PC-3 (cell line): ENCODE measurements at regions of chr22 and their contacts with region 1.

Region 1: GRCh38 chr22:37953437-37954179 is at the starts of genes C22orf23 and POLR2F:
- DNase-seq: peak; percentile 95
- ATAC-seq: peak; percentile 86
- H3K4me3 ChIP-seq: peak within 1 kb of the TSS; percentile 96
- H3K27ac ChIP-seq: peak within 1 kb of the TSS; percentile 18
- H3K4me1 ChIP-seq: peaks cover 5% of the 10 kb centered on the region
- H3K27me3 ChIP-seq: no peaks in the 10 kb centered on the region
- CTCF ChIP-seq: no peak
- total RNA-seq, gene C22orf23: 0.52 and 0.69 TPM in 2 replicates
- total RNA-seq, gene POLR2F: 177 and 238 TPM in 2 replicates

Region 2: DNA sequence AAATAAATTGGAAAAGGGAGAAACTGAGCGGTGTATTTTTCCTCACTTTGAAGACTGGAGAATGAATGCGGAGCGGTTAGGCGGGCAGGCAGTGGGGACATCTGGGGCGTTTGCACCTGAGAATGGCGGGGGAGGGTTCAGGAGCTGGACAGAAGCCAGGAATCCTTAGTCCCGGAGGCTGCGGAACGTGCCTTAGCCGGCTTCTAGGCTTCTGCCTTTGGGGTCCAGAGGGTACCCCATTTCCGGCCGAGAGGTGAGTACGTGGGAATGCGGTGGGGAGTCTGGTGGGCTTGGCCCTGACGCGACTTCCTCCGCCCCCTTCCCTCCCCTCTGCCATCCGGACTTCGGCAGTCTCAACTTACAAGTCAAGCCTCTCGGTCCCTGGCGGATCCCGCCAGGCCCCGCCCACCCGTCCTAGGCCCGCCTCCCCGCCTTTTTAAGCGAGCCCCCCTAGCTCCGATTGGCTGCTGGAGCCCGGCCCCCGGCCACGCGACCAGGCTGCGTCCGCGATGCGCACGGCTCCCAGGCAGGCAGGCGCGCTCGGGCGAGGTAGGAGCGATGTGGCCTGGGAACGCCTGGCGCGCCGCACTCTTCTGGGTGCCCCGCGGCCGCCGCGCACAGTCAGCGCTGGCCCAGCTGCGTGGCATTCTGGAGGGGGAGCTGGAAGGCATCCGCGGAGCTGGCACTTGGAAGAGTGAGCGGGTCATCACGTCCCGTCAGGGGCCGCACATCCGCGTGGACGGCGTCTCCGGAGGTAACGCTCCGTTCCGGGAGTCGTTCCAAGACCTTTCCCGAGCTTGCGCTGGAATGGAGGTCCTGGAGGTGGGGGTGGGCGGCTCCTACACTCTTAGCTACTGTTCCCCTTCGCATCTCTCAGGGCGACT is 146.0 kb before region 1 on chr22 and contains the start of gene GCAT:
- CTCF ChIA-PET with region 1: no interaction called
- POLR2A ChIA-PET with region 1: interaction called, 10 read pairs
- intact Hi-C with region 1: no loop called
- DNase-seq: peak; percentile 91
- ATAC-seq: peak; percentile 65
- H3K4me3 ChIP-seq: peak within 1 kb of the TSS; percentile 100
- H3K27ac ChIP-seq: peak within 1 kb of the TSS; percentile 66
- H3K4me1 ChIP-seq: peaks cover 17% of the 10 kb centered on the region
- H3K27me3 ChIP-seq: no peaks in the 10 kb centered on the region
- CTCF ChIP-seq: no peak
- total RNA-seq, gene GCAT: 26.0 and 33.3 TPM in 2 replicates

Region 3: GRCh38 chr22:37896181-37896592 is 57.4 kb before region 1 on chr22:
- CTCF ChIA-PET with region 1: no interaction called
- POLR2A ChIA-PET with region 1: interaction called, 19 read pairs
- intact Hi-C with region 1: no loop called
- DNase-seq: peak; percentile 88
- ATAC-seq: peak; percentile 71
- H3K4me3 ChIP-seq: no peak overlapping the region; the same call in 1 of the 2 replicates
- H3K27ac ChIP-seq: peak overlapping the region; percentile 85
- H3K4me1 ChIP-seq: peaks cover 34% of the 10 kb centered on the region
- H3K27me3 ChIP-seq: no peaks in the 10 kb centered on the region
- CTCF ChIP-seq: no peak

Region 4: DNA sequence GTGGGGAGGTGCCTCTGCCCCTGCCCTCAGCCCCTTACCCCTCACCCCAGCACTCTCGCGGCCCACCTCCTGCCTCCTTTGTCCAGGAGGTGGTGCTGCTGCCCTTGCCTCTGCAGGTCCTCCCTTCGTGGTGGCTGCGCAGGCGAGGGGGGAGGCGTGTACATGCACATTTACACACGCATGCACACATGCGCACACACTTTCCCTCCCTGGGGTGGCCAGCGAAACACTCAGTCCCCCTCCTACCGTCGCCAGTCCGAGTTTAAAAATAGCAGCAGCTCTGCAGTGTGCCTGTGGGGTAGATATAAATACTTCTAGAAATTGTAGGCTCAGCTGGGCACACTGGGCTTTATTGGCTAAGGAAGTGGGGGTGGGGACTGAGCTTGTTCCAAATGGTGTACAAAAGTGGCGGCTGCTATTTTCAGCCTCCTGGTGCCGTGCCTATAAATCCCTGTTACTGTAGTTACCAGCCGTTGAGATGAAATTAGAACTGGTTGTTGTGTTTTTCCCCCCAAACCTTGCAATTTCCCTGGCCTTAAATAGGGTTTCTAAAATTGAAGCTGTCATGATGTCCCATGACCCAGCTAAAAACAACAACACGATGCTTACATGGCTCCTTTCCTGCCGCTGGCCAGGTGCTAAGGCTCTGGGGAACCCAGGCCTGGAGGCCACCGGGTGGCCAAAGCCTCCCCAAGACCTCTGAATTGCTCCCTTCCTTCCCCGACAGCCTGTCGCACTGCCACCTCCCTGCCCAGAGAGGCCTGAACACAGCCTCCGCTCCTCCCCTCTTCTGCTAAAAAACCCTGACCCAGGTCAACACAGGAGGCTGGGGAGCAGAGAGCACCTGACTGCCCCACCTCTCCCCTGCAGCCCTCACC is 116.0 kb after region 1 on chr22:
- CTCF ChIA-PET with region 1: no interaction called
- POLR2A ChIA-PET with region 1: no interaction called
- intact Hi-C with region 1: no loop called
- DNase-seq: no peak
- ATAC-seq: no peak
- H3K4me3 ChIP-seq: no peak overlapping the region
- H3K27ac ChIP-seq: no peak overlapping the region
- H3K4me1 ChIP-seq: no peaks in the 10 kb centered on the region
- H3K27me3 ChIP-seq: no peaks in the 10 kb centered on the region
- CTCF ChIP-seq: peak; percentile 51